ENCODE measurements at regions of chr2 and their contacts with region 1.

Region 1: GRCh38 chr2:203887677-203888076 is 20.1 kb downstream of the CTLA4 start:
- DNase-seq: no peak
- H3K4me3 Mint-ChIP-seq: no peak overlapping the region
- H3K27ac Mint-ChIP-seq: peak overlapping the region; percentile 83
- H3K4me1 Mint-ChIP-seq: peaks cover 80% of the 10 kb centered on the region
- H3K27me3 Mint-ChIP-seq: no peaks in the 10 kb centered on the region

Region 2: DNA sequence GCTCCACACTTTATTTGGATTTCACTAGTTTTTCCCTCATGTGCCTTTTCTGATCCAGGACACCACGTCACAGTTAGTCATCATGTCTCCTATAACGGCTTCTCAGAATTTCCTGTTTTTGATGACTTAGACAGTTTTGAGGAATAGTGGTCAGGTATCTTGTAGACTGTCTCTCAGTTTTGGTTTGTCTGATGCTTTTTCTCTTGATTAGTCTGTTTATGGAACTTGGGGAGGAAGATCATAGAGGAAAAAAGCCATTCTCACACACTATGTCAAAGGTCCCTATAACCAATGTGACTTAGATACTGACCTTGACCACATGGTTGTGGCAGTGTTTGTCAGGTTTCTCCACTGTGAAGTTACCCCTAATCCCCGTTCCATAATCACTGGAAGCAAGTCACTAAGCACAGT is 441.6 kb before region 1 on chr2:
- CTCF ChIA-PET with region 1: no interaction called
- POLR2A ChIA-PET with region 1: no interaction called
- DNase-seq: no peak
- H3K4me3 Mint-ChIP-seq: no peak overlapping the region
- H3K27ac Mint-ChIP-seq: no peak overlapping the region
- H3K4me1 Mint-ChIP-seq: peaks cover 18% of the 10 kb centered on the region
- H3K27me3 Mint-ChIP-seq: no peaks in the 10 kb centered on the region

Region 3: GRCh38 chr2:203673933-203674332 is 213.7 kb before region 1 on chr2:
- CTCF ChIA-PET with region 1: no interaction called
- POLR2A ChIA-PET with region 1: no interaction called
- DNase-seq: peak; percentile 60
- H3K4me3 Mint-ChIP-seq: no peak overlapping the region
- H3K27ac Mint-ChIP-seq: no peak overlapping the region
- H3K4me1 Mint-ChIP-seq: peaks cover 21% of the 10 kb centered on the region
- H3K27me3 Mint-ChIP-seq: no peaks in the 10 kb centered on the region

Region 4: DNA sequence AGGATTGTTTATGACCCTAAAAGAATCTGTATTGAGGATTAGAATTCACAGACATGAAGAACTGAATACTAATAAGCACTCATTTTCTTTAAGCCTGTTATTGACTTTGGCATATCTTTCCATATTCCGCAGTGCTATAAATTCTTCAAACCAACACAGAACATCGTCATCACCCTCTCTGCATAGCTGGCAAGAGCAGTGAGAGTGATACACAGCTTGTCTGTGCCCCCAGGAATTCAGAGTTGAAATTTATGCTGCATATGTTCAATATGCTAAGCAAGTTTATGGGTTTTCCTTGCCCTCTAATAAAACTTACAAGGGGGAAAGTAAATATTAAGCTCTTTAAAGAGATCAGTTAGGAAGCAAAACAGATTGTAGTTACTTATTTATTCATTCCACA is 12.6 kb after region 1 on chr2:
- CTCF ChIA-PET with region 1: interaction called, 4 read pairs
- POLR2A ChIA-PET with region 1: interaction called, 593 read pairs
- DNase-seq: no peak
- H3K4me3 Mint-ChIP-seq: no peak overlapping the region
- H3K27ac Mint-ChIP-seq: no peak overlapping the region
- H3K4me1 Mint-ChIP-seq: peaks cover 40% of the 10 kb centered on the region
- H3K27me3 Mint-ChIP-seq: no peaks in the 10 kb centered on the region